HepG2 (cell line): ENCODE measurements at regions of chr1 and their contacts with region 1.

Region 1: GRCh38 chr1:216742625-216743024 is 19.4 kb upstream of the ESRRG start:
- DNase-seq: no peak
- ATAC-seq: no peak
- H3K4me3 ChIP-seq: no peak overlapping the region
- H3K27ac ChIP-seq: no peak overlapping the region
- H3K4me1 ChIP-seq: no peaks in the 10 kb centered on the region
- H3K27me3 ChIP-seq: no peaks in the 10 kb centered on the region; a peak in 1 of 5 replicates
- CTCF ChIP-seq: no peak
- EP300 ChIP-seq: no peak
- POLR2A ChIP-seq: no peak
- RAD21 ChIP-seq: no peak

Region 2: DNA sequence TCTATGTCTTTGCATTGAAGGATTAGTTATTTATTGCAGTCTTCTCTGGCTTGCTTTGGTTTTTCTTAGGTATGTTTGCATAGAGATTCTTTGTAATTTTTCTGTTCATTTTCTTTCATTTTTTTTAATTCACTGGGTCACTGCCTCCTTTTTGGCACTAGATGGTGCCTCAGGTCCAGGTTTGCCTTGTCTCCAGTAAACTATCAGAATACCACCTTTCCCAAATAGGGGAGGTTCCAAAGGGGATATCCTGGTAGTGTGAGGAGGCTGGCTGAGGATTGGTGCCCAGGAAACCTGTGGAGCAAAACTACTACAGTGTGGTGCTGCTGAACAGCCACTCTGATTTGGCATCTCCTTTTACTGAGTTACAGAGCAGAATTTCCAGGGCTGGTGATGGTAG is 918.4 kb before region 1 on chr1:
- CTCF ChIA-PET with region 1: no interaction called
- POLR2A ChIA-PET with region 1: no interaction called
- in situ Hi-C with region 1: no loop called
- intact Hi-C with region 1: loop called (anchors 10 kb)
- DNase-seq: no peak
- ATAC-seq: no peak
- H3K4me3 ChIP-seq: no peak overlapping the region
- H3K27ac ChIP-seq: no peak overlapping the region
- H3K4me1 ChIP-seq: no peaks in the 10 kb centered on the region
- H3K27me3 ChIP-seq: no peaks in the 10 kb centered on the region
- CTCF ChIP-seq: 0 out of 2 replicates have a peak, but pooled peaks have one; percentile 22
- EP300 ChIP-seq: no peak
- POLR2A ChIP-seq: no peak
- RAD21 ChIP-seq: no peak

Region 3: GRCh38 chr1:216310776-216311175 is 431.8 kb before region 1 on chr1:
- CTCF ChIA-PET with region 1: no interaction called
- POLR2A ChIA-PET with region 1: no interaction called
- in situ Hi-C with region 1: no loop called
- intact Hi-C with region 1: loop called (anchors 10 kb)
- DNase-seq: no peak
- ATAC-seq: no peak; the same call in 2 of the 3 replicates
- H3K4me3 ChIP-seq: no peak overlapping the region
- H3K27ac ChIP-seq: no peak overlapping the region
- H3K4me1 ChIP-seq: no peaks in the 10 kb centered on the region
- H3K27me3 ChIP-seq: no peaks in the 10 kb centered on the region
- CTCF ChIP-seq: peak; percentile 48
- EP300 ChIP-seq: no peak
- POLR2A ChIP-seq: no peak
- RAD21 ChIP-seq: no peak

Region 4: GRCh38 chr1:216606047-216606637 is 136.5 kb before region 1 on chr1:
- CTCF ChIA-PET with region 1: no interaction called
- POLR2A ChIA-PET with region 1: no interaction called
- in situ Hi-C with region 1: no loop called
- intact Hi-C with region 1: no loop called
- DNase-seq: no peak
- ATAC-seq: no peak
- H3K4me3 ChIP-seq: no peak overlapping the region
- H3K27ac ChIP-seq: no peak overlapping the region
- H3K4me1 ChIP-seq: no peaks in the 10 kb centered on the region
- H3K27me3 ChIP-seq: peaks cover 0 to 4% of the 10 kb centered on the region in 2 experiments; a peak in 1 of 5 replicates
- CTCF ChIP-seq: no peak
- EP300 ChIP-seq: no peak
- POLR2A ChIP-seq: no peak
- RAD21 ChIP-seq: no peak

Region 5: GRCh38 chr1:216758161-216758560 is 15.5 kb after region 1 on chr1:
- CTCF ChIA-PET with region 1: no interaction called
- POLR2A ChIA-PET with region 1: no interaction called
- in situ Hi-C with region 1: no loop called
- intact Hi-C with region 1: no loop called
- DNase-seq: no peak
- ATAC-seq: no peak
- H3K4me3 ChIP-seq: no peak overlapping the region
- H3K27ac ChIP-seq: no peak overlapping the region
- H3K4me1 ChIP-seq: no peaks in the 10 kb centered on the region
- H3K27me3 ChIP-seq: no peaks in the 10 kb centered on the region
- CTCF ChIP-seq: no peak
- EP300 ChIP-seq: no peak
- POLR2A ChIP-seq: no peak
- RAD21 ChIP-seq: no peak